MCF 10A (cell line): ENCODE measurements at regions of chr11 and their contacts with region 1.

Region 1: GRCh38 chr11:62394825-62395538 is 23.9 kb upstream of the SCGB1A1 start:
- DNase-seq: peak; percentile 88
- H3K4me3 Mint-ChIP-seq: peak overlapping the region; percentile 73
- H3K27ac Mint-ChIP-seq: peak overlapping the region; percentile 29
- H3K4me1 Mint-ChIP-seq: peaks cover 11% of the 10 kb centered on the region
- H3K27me3 Mint-ChIP-seq: no peaks in the 10 kb centered on the region
- CTCF ChIP-seq: peak; percentile 76

Region 2: DNA sequence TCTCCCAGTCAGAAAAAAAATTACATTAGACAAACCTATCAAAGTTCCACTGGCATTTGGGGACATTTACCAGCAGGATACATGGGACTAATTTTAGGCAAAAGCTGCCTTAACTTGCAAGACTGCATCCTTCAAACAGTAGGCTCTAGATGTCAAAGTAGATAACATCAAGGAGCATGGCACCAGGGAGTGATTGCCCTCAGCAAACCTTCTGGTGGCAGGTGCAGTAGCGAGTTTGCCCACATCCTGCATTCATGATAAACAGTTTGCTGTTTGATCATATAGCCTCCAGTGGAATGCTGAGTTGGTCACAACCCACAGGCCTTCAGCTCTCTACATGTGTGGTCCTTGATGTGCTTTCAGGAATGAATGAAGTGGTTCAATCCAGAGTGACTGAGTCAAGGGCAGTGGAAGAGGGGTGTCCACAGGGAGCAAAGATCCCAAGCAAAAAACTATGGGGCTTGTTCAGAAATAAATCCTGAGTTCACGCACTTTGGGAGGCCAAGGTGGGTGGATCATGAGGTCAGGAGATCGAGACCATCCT is 140.9 kb before region 1 on chr11:
- CTCF ChIA-PET with region 1: no interaction called
- POLR2A ChIA-PET with region 1: no interaction called
- intact Hi-C with region 1: no loop called
- DNase-seq: no peak
- H3K4me3 Mint-ChIP-seq: no peak overlapping the region
- H3K27ac Mint-ChIP-seq: no peak overlapping the region
- H3K4me1 Mint-ChIP-seq: no peaks in the 10 kb centered on the region
- H3K27me3 Mint-ChIP-seq: peaks cover 32% of the 10 kb centered on the region
- CTCF ChIP-seq: no peak

Region 3: DNA sequence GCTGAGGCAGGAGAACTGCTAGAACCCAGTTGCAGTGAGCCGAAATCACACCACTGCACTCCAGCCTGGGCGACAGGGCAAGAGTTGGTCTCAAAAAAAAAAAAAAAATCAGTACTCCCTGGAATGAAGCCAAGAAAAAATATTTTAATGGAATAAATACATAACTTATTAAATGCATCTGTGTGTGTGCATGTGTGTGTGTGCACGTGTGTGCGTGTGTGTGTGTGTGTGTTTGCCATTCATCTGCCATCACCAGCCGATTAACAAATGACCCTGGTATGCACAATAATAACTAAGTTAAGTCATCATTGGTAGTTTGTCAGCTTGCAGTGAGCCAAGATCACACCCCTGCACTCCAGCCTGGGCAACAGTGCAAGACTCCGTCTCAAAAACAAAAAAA is 11.2 kb before region 1 on chr11:
- CTCF ChIA-PET with region 1: interaction called, 25 read pairs
- POLR2A ChIA-PET with region 1: no interaction called
- intact Hi-C with region 1: loop called (anchors 1 kb)
- DNase-seq: no peak
- H3K4me3 Mint-ChIP-seq: no peak overlapping the region
- H3K27ac Mint-ChIP-seq: no peak overlapping the region
- H3K4me1 Mint-ChIP-seq: peaks cover 10% of the 10 kb centered on the region
- H3K27me3 Mint-ChIP-seq: peaks cover 2% of the 10 kb centered on the region
- CTCF ChIP-seq: no peak

Region 4: GRCh38 chr11:62411524-62411923 is 16.5 kb after region 1 on chr11:
- CTCF ChIA-PET with region 1: interaction called, 31 read pairs
- POLR2A ChIA-PET with region 1: interaction called, 6 read pairs
- intact Hi-C with region 1: no loop called
- DNase-seq: no peak
- H3K4me3 Mint-ChIP-seq: no peak overlapping the region
- H3K27ac Mint-ChIP-seq: no peak overlapping the region
- H3K4me1 Mint-ChIP-seq: no peaks in the 10 kb centered on the region
- H3K27me3 Mint-ChIP-seq: no peaks in the 10 kb centered on the region
- CTCF ChIP-seq: no peak

Region 5: GRCh38 chr11:62427630-62428233 is 32.8 kb after region 1 on chr11:
- CTCF ChIA-PET with region 1: interaction called, 23 read pairs
- POLR2A ChIA-PET with region 1: interaction called, 5 read pairs
- intact Hi-C with region 1: no loop called
- DNase-seq: no peak
- H3K4me3 Mint-ChIP-seq: no peak overlapping the region
- H3K27ac Mint-ChIP-seq: no peak overlapping the region
- H3K4me1 Mint-ChIP-seq: peaks cover 7% of the 10 kb centered on the region
- H3K27me3 Mint-ChIP-seq: no peaks in the 10 kb centered on the region
- CTCF ChIP-seq: no peak

Region 6: GRCh38 chr11:62461740-62462507 is 66.9 kb after region 1 on chr11:
- CTCF ChIA-PET with region 1: no interaction called
- POLR2A ChIA-PET with region 1: no interaction called
- intact Hi-C with region 1: no loop called
- DNase-seq: peak; percentile 18
- H3K4me3 Mint-ChIP-seq: no peak overlapping the region
- H3K27ac Mint-ChIP-seq: no peak overlapping the region
- H3K4me1 Mint-ChIP-seq: no peaks in the 10 kb centered on the region
- H3K27me3 Mint-ChIP-seq: no peaks in the 10 kb centered on the region
- CTCF ChIP-seq: no peak

Region 7: GRCh38 chr11:62621567-62622470 is 226.8 kb after region 1 on chr11 and contains the start of gene B3GAT3:
- CTCF ChIA-PET with region 1: interaction called, 4 read pairs
- POLR2A ChIA-PET with region 1: interaction called, 10 read pairs
- intact Hi-C with region 1: no loop called
- DNase-seq: peak; percentile 98
- H3K4me3 Mint-ChIP-seq: peak within 1 kb of the TSS; percentile 97
- H3K27ac Mint-ChIP-seq: peak within 1 kb of the TSS; percentile 92
- H3K4me1 Mint-ChIP-seq: peaks cover 12% of the 10 kb centered on the region
- H3K27me3 Mint-ChIP-seq: no peaks in the 10 kb centered on the region
- CTCF ChIP-seq: no peak
- total RNA-seq, gene B3GAT3: 40.1 and 42.4 TPM in 2 replicates

Region 8: GRCh38 chr11:62689421-62690183 is 294.6 kb after region 1 on chr11 and contains the start of gene LRRN4CL:
- CTCF ChIA-PET with region 1: interaction called, 10 read pairs
- POLR2A ChIA-PET with region 1: no interaction called
- intact Hi-C with region 1: loop called (anchors 1 kb)
- DNase-seq: peak; percentile 83
- H3K4me3 Mint-ChIP-seq: no peak within 1 kb of the TSS
- H3K27ac Mint-ChIP-seq: peak within 1 kb of the TSS; percentile 86
- H3K4me1 Mint-ChIP-seq: peaks cover 19% of the 10 kb centered on the region
- H3K27me3 Mint-ChIP-seq: no peaks in the 10 kb centered on the region
- CTCF ChIP-seq: no peak
- total RNA-seq, gene LRRN4CL: 0.42 and 0.81 TPM in 2 replicates

Region 9: GRCh38 chr11:62694455-62695167 is 299.6 kb after region 1 on chr11:
- CTCF ChIA-PET with region 1: interaction called, 10 read pairs
- POLR2A ChIA-PET with region 1: no interaction called
- intact Hi-C with region 1: loop called (anchors 1 kb)
- DNase-seq: peak; percentile 86
- H3K4me3 Mint-ChIP-seq: no peak overlapping the region
- H3K27ac Mint-ChIP-seq: no peak overlapping the region
- H3K4me1 Mint-ChIP-seq: peaks cover 6% of the 10 kb centered on the region
- H3K27me3 Mint-ChIP-seq: no peaks in the 10 kb centered on the region
- CTCF ChIP-seq: peak; percentile 80